Dendritic cell treated with granulocyte-macrophage colony-stimulating factor and Interleukin-4, amounts not matched to agents 40 ng/mL and 50 ng/mL, for 4 days (primary cell): ENCODE measurements at regions of chr7 and their contacts with region 1.

Region 1: GRCh38 chr7:2821161-2821841 is 22.8 kb downstream of the GNA12 start:
- H3K4me3 Mint-ChIP-seq: no peak overlapping the region
- H3K27ac Mint-ChIP-seq: peak overlapping the region; percentile 66
- H3K4me1 Mint-ChIP-seq: peaks cover 56% of the 10 kb centered on the region
- H3K27me3 Mint-ChIP-seq: no peaks in the 10 kb centered on the region

Region 2: DNA sequence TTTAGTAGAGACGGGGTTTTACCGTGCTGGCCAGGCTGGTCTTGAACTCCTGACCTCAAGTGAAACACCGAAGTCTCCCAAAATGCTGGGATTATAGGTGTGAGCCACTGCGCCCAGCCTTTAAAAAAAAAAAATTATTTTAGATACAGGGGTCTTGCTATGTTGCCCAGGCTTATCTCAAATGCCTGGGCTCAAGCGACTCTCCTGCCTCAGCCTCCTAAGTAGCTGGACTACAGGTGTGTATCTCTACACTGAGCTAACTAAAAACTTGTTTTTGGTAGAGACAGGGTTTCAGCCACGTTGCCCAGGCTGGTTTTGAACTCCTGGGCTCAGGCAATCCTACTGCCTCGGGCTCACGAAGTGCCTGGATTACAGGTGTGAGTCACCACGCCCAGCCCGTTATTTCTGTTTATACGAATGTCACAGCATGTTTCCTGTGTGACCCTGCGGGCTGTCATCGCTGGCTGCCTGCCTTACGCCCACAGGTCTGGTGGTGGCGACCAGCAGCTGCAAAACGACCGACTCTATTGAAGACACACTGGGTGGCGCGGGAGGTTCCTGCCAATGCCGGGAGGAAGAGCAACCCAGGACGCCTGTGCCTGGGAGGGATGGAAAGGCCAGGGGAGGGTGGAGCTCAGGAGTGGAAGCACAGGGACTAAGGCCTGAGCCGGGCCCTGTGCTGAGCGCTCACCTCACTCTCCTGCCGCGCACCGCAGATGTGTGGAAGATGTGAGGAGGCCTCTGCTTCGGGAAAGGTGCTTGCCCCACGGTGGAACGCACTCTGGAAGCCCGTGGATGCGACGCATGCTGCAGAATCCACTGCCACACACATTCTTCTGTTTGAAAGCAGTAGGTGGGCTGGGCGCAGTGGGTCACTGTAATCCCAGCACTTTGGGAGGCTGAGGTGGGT is 100.5 kb before region 1 on chr7:
- intact Hi-C with region 1: loop called (anchors 10 kb)
- H3K4me3 Mint-ChIP-seq: no peak overlapping the region
- H3K27ac Mint-ChIP-seq: peak overlapping the region; percentile 18
- H3K4me1 Mint-ChIP-seq: peaks cover 40% of the 10 kb centered on the region
- H3K27me3 Mint-ChIP-seq: peaks cover 30% of the 10 kb centered on the region

Region 3: GRCh38 chr7:2757904-2758672 is 63.2 kb before region 1 on chr7:
- intact Hi-C with region 1: no loop called
- H3K4me3 Mint-ChIP-seq: peak overlapping the region; percentile 61
- H3K27ac Mint-ChIP-seq: peak overlapping the region; percentile 84
- H3K4me1 Mint-ChIP-seq: peaks cover 69% of the 10 kb centered on the region
- H3K27me3 Mint-ChIP-seq: no peaks in the 10 kb centered on the region

Region 4: GRCh38 chr7:3520206-3520605 is 698.9 kb after region 1 on chr7:
- intact Hi-C with region 1: no loop called
- H3K4me3 Mint-ChIP-seq: no peak overlapping the region
- H3K27ac Mint-ChIP-seq: no peak overlapping the region
- H3K4me1 Mint-ChIP-seq: no peaks in the 10 kb centered on the region
- H3K27me3 Mint-ChIP-seq: no peaks in the 10 kb centered on the region